Activated CD8-positive, alpha-beta memory T cell treated with anti-CD3 and anti-CD28 coated beads, Interleukin-2, amount 10 ng/mL, durations not matched to agents 7 days and 5 days (primary cell): ENCODE measurements at regions of chr12 and their contacts with region 1.

Region 1: GRCh38 chr12:122336015-122336946 is 70.0 kb upstream of the VPS33A start:
- DNase-seq: peak; percentile 71
- ATAC-seq: peak; percentile 73
- H3K4me3 Mint-ChIP-seq: peak overlapping the region; percentile 2
- H3K27ac Mint-ChIP-seq: peak overlapping the region; percentile 79
- H3K4me1 Mint-ChIP-seq: peaks cover 14% of the 10 kb centered on the region
- H3K27me3 Mint-ChIP-seq: no peaks in the 10 kb centered on the region

Region 2: GRCh38 chr12:122297494-122297893 is 38.8 kb before region 1 on chr12:
- CTCF ChIA-PET with region 1: no interaction called
- DNase-seq: no peak
- ATAC-seq: no peak
- H3K4me3 Mint-ChIP-seq: no peak overlapping the region
- H3K27ac Mint-ChIP-seq: no peak overlapping the region
- H3K4me1 Mint-ChIP-seq: peaks cover 8% of the 10 kb centered on the region
- H3K27me3 Mint-ChIP-seq: no peaks in the 10 kb centered on the region

Region 3: GRCh38 chr12:122322501-122322900 is 13.8 kb before region 1 on chr12:
- CTCF ChIA-PET with region 1: interaction called, 30 read pairs
- DNase-seq: no peak
- ATAC-seq: no peak
- H3K4me3 Mint-ChIP-seq: no peak overlapping the region
- H3K27ac Mint-ChIP-seq: no peak overlapping the region
- H3K4me1 Mint-ChIP-seq: peaks cover 14% of the 10 kb centered on the region
- H3K27me3 Mint-ChIP-seq: no peaks in the 10 kb centered on the region

Region 4: GRCh38 chr12:122356192-122356635 is 19.9 kb after region 1 on chr12:
- CTCF ChIA-PET with region 1: interaction called, 62 read pairs
- DNase-seq: peak; percentile 74
- ATAC-seq: peak; percentile 87
- H3K4me3 Mint-ChIP-seq: no peak overlapping the region
- H3K27ac Mint-ChIP-seq: peak overlapping the region; percentile 36
- H3K4me1 Mint-ChIP-seq: peaks cover 18% of the 10 kb centered on the region
- H3K27me3 Mint-ChIP-seq: no peaks in the 10 kb centered on the region

Region 5: GRCh38 chr12:122500685-122501488 is 164.6 kb after region 1 on chr12 and contains the start of gene ZCCHC8:
- CTCF ChIA-PET with region 1: interaction called, 12 read pairs
- DNase-seq: peak; percentile 99
- ATAC-seq: peak; percentile 94
- H3K4me3 Mint-ChIP-seq: peak within 1 kb of the TSS; percentile 97
- H3K27ac Mint-ChIP-seq: peak within 1 kb of the TSS; percentile 99
- H3K4me1 Mint-ChIP-seq: peaks cover 36% of the 10 kb centered on the region
- H3K27me3 Mint-ChIP-seq: no peaks in the 10 kb centered on the region
- total RNA-seq, gene ZCCHC8: 45.2 to 45.3 TPM